ENCODE measurements at regions of chr11 and their contacts with region 1.

Region 1: DNA sequence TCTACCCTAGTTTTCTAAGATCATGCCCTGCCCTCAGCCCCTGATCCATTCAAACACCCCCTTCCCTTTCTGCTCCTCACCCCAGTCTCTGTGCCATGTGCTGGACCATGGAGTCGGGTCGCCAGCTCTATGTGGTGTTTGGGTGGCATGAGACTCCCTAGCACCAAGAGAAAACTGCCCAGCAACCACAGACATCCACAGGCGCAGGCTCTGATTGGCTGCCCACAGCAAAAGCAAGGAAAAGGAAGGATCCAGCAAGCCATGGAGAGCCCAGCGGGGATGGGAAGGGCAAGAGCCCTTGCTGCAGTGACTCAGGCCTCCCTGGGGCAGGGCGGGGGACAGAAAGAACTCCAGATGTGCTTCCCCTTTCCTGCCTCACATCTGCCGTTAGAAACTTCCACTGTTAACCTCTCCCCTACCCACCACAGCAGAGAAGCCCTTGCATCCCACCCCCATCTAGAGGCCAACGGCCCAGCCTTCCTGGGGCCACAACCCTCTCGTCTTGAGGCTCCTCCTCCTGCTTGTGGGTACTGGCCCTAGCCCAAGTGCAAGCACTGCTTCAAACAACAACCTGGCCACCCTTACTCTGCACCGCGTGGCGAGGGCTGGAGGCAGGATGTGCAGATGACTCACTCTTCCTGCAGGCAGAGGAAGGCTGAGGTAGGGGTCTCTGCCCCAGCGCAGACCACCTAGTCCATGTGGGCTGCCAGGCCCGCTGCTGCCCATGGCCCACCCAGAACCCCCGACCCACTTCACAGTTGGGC is 9.7 kb upstream of the AHNAK start:
- DNase-seq: peak; percentile 72 to 94 (median 83)
- ATAC-seq: peak; percentile 46
- H3K4me3 ChIP-seq: peak overlapping the region; percentile 49
- H3K4me3 Mint-ChIP-seq: peak overlapping the region; percentile 84
- H3K27ac ChIP-seq: peak overlapping the region; percentile 96 to 97
- H3K27ac Mint-ChIP-seq: peak overlapping the region; percentile 95
- H3K4me1 ChIP-seq: peaks cover 95% of the 10 kb centered on the region
- H3K4me1 Mint-ChIP-seq: peaks cover 84% of the 10 kb centered on the region
- H3K27me3 ChIP-seq: no peaks in the 10 kb centered on the region
- H3K27me3 Mint-ChIP-seq: no peaks in the 10 kb centered on the region
- CTCF ChIP-seq: no peak

Region 2: GRCh38 chr11:61792310-61793085 is 763.8 kb before region 1 on chr11 and contains the starts of genes FEN1 and TMEM258:
- CTCF ChIA-PET with region 1: no interaction called
- POLR2A ChIA-PET with region 1: no interaction called
- intact Hi-C with region 1: no loop called
- DNase-seq: peak; percentile 74 to 94 (median 80)
- ATAC-seq: peak; percentile 88
- H3K4me3 ChIP-seq: peak within 1 kb of the TSS; percentile 87
- H3K4me3 Mint-ChIP-seq: peak within 1 kb of the TSS; percentile 94
- H3K27ac ChIP-seq: peak within 1 kb of the TSS; percentile 93 to 97
- H3K27ac Mint-ChIP-seq: peak within 1 kb of the TSS; percentile 95
- H3K4me1 ChIP-seq: peaks cover 34% of the 10 kb centered on the region
- H3K4me1 Mint-ChIP-seq: peaks cover 44% of the 10 kb centered on the region
- H3K27me3 ChIP-seq: no peaks in the 10 kb centered on the region
- H3K27me3 Mint-ChIP-seq: no peaks in the 10 kb centered on the region
- CTCF ChIP-seq: no peak
- total RNA-seq, gene FEN1: 7.5 to 9.1 TPM
- total RNA-seq, gene TMEM258: 55.2 to 56.0 TPM

Region 3: GRCh38 chr11:62497132-62497915 is 59.0 kb before region 1 on chr11:
- CTCF ChIA-PET with region 1: interaction called, 9 read pairs
- POLR2A ChIA-PET with region 1: no interaction called
- intact Hi-C with region 1: loop called in 1 of 2 experiments (anchors 1 kb)
- DNase-seq: peak in 4 of 14 experiments; percentile 31 to 56 (median 48)
- ATAC-seq: peak; percentile 59
- H3K4me3 ChIP-seq: no peak overlapping the region
- H3K4me3 Mint-ChIP-seq: no peak overlapping the region
- H3K27ac ChIP-seq: no peak overlapping the region
- H3K27ac Mint-ChIP-seq: no peak overlapping the region
- H3K4me1 ChIP-seq: peaks cover 3% of the 10 kb centered on the region
- H3K4me1 Mint-ChIP-seq: no peaks in the 10 kb centered on the region
- H3K27me3 ChIP-seq: no peaks in the 10 kb centered on the region
- H3K27me3 Mint-ChIP-seq: peaks cover 2% of the 10 kb centered on the region
- CTCF ChIP-seq: peak; percentile 26

Region 4: GRCh38 chr11:62573592-62574362 is 17.5 kb after region 1 on chr11 and contains the start of gene EEF1G:
- CTCF ChIA-PET with region 1: interaction called, 12 read pairs
- POLR2A ChIA-PET with region 1: interaction called, 30 read pairs
- intact Hi-C with region 1: loop called in 1 of 2 experiments (anchors 1 kb)
- DNase-seq: peak; percentile 95 to 100 (median 97)
- ATAC-seq: peak; percentile 94
- H3K4me3 ChIP-seq: peak within 1 kb of the TSS; percentile 82
- H3K4me3 Mint-ChIP-seq: peak within 1 kb of the TSS; percentile 93
- H3K27ac ChIP-seq: peak within 1 kb of the TSS; percentile 76 to 83
- H3K27ac Mint-ChIP-seq: peak within 1 kb of the TSS; percentile 89
- H3K4me1 ChIP-seq: peaks cover 48% of the 10 kb centered on the region
- H3K4me1 Mint-ChIP-seq: peaks cover 55% of the 10 kb centered on the region
- H3K27me3 ChIP-seq: no peaks in the 10 kb centered on the region
- H3K27me3 Mint-ChIP-seq: no peaks in the 10 kb centered on the region
- CTCF ChIP-seq: no peak
- total RNA-seq, gene EEF1G: 2,181 to 2,269 TPM

Measured in CD4-positive, alpha-beta T cell (primary cell).